Naive thymus-derived CD8-positive, alpha-beta T cell (primary cell): ENCODE measurements at regions of chr2 and their contacts with region 1.

Region 1: DNA sequence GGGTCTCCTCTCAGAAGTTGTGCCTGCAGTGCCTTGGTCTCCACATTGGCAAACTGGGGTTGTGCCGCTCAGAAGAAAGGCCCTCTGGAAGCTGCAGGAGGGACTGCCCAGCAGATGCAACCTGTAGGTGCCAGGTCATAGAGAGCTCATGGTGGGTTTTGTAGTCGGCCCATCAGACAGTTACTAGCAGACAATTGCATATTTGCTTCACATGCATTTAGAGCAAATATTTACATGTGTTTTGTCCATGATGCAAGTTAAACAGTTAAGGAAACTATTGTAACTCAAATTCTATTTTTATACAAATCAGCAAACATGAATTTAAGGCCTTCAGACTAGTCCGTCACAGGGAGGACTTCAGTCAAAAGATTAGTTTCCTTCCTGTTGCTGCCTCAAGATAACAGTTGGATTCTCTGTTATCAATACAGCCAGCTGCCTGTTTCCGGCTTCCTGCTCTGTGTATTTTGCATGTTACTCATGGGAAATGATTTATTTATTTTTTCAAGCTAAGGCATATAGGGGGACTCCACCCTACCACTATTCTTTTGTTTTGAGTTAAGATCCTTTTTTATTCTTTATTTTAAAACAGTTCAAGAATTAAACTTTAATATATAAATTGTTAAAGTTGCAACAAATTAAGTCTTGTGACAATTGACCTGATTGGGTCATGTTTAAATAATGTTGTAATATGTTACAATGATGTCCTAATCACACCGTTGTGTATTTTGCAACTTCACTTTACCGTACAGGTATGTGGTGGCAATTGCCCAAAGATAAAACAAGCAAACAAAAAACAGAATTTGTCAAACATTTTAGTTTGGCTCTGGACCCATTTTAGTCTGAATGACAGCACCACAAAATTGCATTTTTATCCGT is 133.5 kb downstream of the SPTBN1 start:
- DNase-seq: peak in 6 of 10 donors; percentile 33 to 58 (median 45)
- ATAC-seq: peak; percentile 62 to 66
- H3K4me3 Mint-ChIP-seq: peak overlapping the region; percentile 53 to 86 (median 74)
- H3K27ac Mint-ChIP-seq: peak overlapping the region; percentile 86 to 99 (median 94)
- H3K4me1 Mint-ChIP-seq: peaks cover 54 to 96% (median 92%) of the 10 kb centered on the region in 4 donors
- H3K27me3 Mint-ChIP-seq: no peaks in the 10 kb centered on the region

Region 2: DNA sequence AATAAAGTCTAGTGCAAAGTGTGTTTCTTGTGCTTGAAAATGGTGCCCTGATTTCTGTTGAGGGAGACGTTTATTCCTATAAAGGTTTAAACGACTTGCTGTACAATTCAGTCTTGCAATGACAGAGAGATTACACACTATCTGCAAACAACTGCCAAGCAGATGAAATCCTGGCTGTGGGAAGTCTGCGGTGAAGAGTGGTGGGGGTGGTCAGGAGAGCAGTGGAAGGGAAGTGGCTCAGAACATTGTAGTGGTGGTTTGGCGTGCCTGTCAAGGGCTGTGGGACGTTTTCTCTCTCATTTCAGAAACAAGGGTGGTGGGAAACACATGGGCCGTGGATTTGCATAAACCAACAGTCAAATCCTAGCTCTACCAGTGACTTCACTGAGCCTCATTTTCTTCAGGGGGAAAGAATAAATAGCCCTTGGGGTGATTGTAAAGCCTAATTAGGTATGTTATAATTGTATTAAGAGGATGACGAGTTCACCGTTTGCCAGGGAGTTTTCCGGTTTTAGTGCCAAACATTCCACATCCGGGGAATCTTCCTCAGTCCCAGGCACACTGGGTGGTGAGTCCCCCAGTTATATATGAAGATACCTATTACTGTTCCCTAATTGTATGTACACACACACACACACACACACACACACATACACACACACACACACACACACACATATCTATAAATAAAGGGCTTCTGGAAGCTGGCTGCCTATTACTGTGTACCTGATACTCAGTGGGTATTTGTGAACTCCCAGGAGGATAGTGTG is 18.5 kb before region 1 on chr2:
- POLR2A ChIA-PET with region 1: interaction called, 68 read pairs
- DNase-seq: peak; percentile 39 to 82 (median 70)
- ATAC-seq: peak; percentile 14 to 30
- H3K4me3 Mint-ChIP-seq: peak overlapping the region; percentile 71 to 93 (median 84)
- H3K27ac Mint-ChIP-seq: peak overlapping the region; percentile 94 to 99 (median 98)
- H3K4me1 Mint-ChIP-seq: peaks cover 48 to 96% (median 92%) of the 10 kb centered on the region in 4 donors
- H3K27me3 Mint-ChIP-seq: no peaks in the 10 kb centered on the region

Region 3: GRCh38 chr2:54704688-54705605 is 115.4 kb after region 1 on chr2:
- POLR2A ChIA-PET with region 1: no interaction called
- DNase-seq: peak in 3 of 10 donors; percentile 54 to 67 (median 62)
- ATAC-seq: peak; percentile 36 to 56
- H3K4me3 Mint-ChIP-seq: no peak overlapping the region
- H3K27ac Mint-ChIP-seq: no peak overlapping the region
- H3K4me1 Mint-ChIP-seq: peaks cover 0 to 14% (median 4%) of the 10 kb centered on the region in 4 donors
- H3K27me3 Mint-ChIP-seq: peaks cover 0 to 17% (median 8%) of the 10 kb centered on the region in 5 donors